ENCODE measurements at regions of chr13 and their contacts with region 1.

Region 1: DNA sequence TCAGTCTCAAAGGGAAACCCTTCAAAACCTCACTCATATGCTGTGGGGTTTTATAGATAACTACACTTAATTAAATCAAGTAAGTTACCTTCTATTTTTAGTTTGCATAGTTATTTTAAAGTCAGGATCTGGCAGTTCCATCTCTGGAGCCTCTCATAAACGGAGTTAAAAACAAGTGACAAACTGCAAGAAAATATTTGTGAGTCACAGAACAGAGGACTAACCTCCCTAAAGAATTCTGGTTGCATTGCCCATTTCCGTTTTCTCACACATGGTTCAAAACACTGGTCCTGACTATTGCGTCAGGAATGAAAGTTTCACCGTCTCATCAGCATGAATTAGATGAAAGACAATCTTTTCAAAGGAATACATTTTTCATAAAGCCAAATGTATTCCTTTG is 10.6 kb downstream of the RXFP2 start:
- DNase-seq: peak; percentile 81
- H3K4me3 ChIP-seq: no peak overlapping the region
- H3K27ac ChIP-seq: peak overlapping the region; percentile 48
- H3K4me1 ChIP-seq: peaks cover 8% of the 10 kb centered on the region
- H3K27me3 ChIP-seq: no peaks in the 10 kb centered on the region
- CTCF ChIP-seq: no peak

Region 2: DNA sequence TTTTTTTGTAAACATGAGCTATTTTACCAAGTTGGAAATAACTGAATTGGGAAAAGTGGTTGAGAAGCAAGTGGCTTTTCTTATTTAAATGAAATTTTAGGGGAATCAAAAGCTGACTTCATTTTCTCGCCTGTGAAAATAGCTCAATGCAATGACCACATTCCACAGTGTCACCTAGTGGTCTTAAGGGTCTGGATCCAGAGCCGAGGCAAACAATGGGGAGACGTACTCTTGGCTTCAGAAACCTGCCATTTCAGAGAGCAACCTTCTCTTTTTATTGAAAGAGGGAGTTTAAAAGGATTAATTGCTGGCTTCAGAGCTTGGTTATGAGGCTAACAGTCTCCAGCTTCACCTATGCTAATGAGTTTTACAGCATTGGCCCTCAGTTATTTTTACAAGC is 50.3 kb before region 1 on chr13:
- CTCF ChIA-PET with region 1: no interaction called
- dilution Hi-C with region 1: no loop called
- in situ Hi-C with region 1: no loop called
- intact Hi-C with region 1: no loop called
- DNase-seq: no peak
- H3K4me3 ChIP-seq: no peak overlapping the region
- H3K27ac ChIP-seq: no peak overlapping the region
- H3K4me1 ChIP-seq: no peaks in the 10 kb centered on the region
- H3K27me3 ChIP-seq: no peaks in the 10 kb centered on the region
- CTCF ChIP-seq: peak in 1 of 2 donors; percentile 11

Region 3: DNA sequence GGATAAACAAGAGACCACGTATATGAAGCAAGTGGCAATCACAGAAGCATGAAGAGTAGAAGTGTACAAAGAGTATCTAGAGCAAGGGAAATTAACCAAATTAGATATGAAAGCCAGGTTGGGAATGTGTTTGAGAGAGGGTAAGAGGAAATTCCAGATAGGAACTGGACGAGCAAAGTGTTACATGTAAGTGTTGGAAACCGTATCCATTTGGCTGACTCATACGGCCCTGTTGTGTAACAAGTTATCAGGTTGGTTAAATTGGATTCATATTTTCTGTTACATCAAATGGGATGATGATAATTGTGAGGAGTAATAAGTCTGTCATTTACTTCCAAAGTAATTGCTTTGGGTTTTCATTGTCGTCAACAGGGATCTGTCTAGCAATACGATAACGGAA is 36.1 kb after region 1 on chr13:
- CTCF ChIA-PET with region 1: no interaction called
- dilution Hi-C with region 1: loop called (anchors 5 kb)
- in situ Hi-C with region 1: no loop called
- intact Hi-C with region 1: no loop called
- DNase-seq: peak; percentile 40
- H3K4me3 ChIP-seq: no peak overlapping the region
- H3K27ac ChIP-seq: no peak overlapping the region
- H3K4me1 ChIP-seq: no peaks in the 10 kb centered on the region
- H3K27me3 ChIP-seq: no peaks in the 10 kb centered on the region
- CTCF ChIP-seq: no peak

Region 4: DNA sequence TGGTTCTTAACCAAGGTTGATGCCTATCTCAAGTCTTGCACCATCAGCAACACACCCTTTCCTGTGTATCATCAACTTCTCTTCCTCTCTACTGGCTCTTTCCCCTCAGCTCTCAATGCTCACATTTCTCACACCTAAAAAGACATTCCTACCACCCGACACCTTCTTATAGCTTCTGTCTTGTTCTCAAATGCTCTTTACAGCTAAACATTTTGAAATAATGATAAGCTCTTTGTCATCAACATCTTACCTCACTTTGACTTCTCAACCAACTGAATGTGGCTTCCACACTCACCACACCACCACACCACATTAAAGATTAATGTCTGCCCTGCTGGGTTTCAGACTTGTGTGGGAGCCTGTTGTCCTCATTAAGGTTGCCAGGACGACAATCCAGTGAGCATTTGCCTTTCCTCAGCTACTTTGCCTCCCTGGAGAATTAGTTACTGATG is 57.2 kb after region 1 on chr13:
- CTCF ChIA-PET with region 1: no interaction called
- dilution Hi-C with region 1: no loop called
- in situ Hi-C with region 1: no loop called
- intact Hi-C with region 1: no loop called
- DNase-seq: peak; percentile 79
- H3K4me3 ChIP-seq: no peak overlapping the region
- H3K27ac ChIP-seq: no peak overlapping the region
- H3K4me1 ChIP-seq: peaks cover 15% of the 10 kb centered on the region
- H3K27me3 ChIP-seq: no peaks in the 10 kb centered on the region
- CTCF ChIP-seq: no peak